B cell (primary cell): ENCODE measurements at regions of chr17 and their contacts with region 1.

Region 1: GRCh38 chr17:8300627-8301242 is 5.5 kb upstream of the SLC25A35 start:
- DNase-seq: peak; percentile 84
- ATAC-seq: peak; percentile 95
- H3K4me3 ChIP-seq: no peak overlapping the region
- H3K4me3 Mint-ChIP-seq: no peak overlapping the region
- H3K27ac ChIP-seq: peak overlapping the region in 1 of 2 donors; percentile 1
- H3K27ac Mint-ChIP-seq: peak overlapping the region; percentile 7
- H3K4me1 ChIP-seq: peaks cover 3 to 4% of the 10 kb centered on the region in 2 donors
- H3K4me1 Mint-ChIP-seq: peaks cover 8% of the 10 kb centered on the region
- H3K27me3 ChIP-seq: no peaks in the 10 kb centered on the region
- H3K27me3 Mint-ChIP-seq: no peaks in the 10 kb centered on the region
- CTCF ChIP-seq: peak; percentile 81

Region 2: DNA sequence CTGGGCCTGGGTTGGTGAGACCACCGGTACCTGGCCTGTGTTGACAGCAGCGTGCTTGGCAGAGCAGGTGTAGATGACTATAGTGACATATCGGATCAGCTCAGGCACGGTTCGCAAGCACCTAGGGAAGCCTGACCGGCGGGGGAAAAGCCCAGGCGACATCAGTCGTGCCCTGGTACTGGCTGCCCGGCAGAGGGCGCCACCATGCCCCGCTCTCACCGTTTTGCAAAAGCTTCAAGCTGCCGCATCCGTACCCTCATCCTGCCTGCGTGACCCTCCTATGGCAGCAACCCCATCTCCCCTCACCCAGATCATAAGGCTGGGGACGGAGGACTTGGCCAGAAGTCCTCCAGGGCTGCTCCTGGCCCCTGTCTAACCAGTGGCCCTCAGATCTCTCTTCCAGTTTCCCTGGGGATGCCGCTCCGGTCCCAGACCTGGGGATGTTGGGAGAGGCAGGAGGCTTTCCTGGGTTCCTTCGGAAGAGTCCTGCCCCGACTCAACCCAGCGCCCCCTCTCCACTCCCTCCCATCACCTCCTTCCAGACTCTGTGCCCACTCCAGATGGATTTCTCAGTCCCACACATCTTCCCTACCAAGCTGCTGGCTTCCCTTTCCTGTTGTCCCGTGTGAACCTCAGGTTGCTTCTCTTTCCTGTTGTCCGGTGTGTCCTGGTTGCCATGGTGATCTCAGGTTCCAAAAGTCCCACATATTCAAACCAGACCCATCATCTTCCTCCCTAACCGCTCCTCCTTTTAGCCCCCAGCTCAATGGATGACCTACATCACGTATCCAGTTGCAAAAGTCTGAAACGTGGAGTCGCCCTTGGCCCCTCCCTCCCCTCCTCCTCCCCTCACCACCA is 226.9 kb before region 1 on chr17:
- CTCF ChIA-PET with region 1: interaction called, 10 read pairs
- POLR2A ChIA-PET with region 1: no interaction called
- intact Hi-C with region 1: loop called (anchors 1 kb)
- DNase-seq: peak; percentile 95
- ATAC-seq: peak; percentile 95
- H3K4me3 ChIP-seq: peak overlapping the region in 1 of 5 experiments; percentile 34
- H3K4me3 Mint-ChIP-seq: peak overlapping the region; percentile 81
- H3K27ac ChIP-seq: no peak overlapping the region
- H3K27ac Mint-ChIP-seq: peak overlapping the region; percentile 57
- H3K4me1 ChIP-seq: peaks cover 28 to 29% of the 10 kb centered on the region in 2 donors
- H3K4me1 Mint-ChIP-seq: peaks cover 27% of the 10 kb centered on the region
- H3K27me3 ChIP-seq: peaks cover 0 to 57% (median 39%) of the 10 kb centered on the region in 4 experiments
- H3K27me3 Mint-ChIP-seq: peaks cover 46% of the 10 kb centered on the region
- CTCF ChIP-seq: peak; percentile 95

Region 3: GRCh38 chr17:8079291-8080207 is 221.2 kb before region 1 on chr17:
- CTCF ChIA-PET with region 1: interaction called, 10 read pairs
- POLR2A ChIA-PET with region 1: no interaction called
- intact Hi-C with region 1: loop called (anchors 1 kb)
- DNase-seq: peak; percentile 90
- ATAC-seq: peak; percentile 82
- H3K4me3 ChIP-seq: peak overlapping the region in 4 of 5 experiments; percentile 57 to 76 (median 70)
- H3K4me3 Mint-ChIP-seq: peak overlapping the region; percentile 96
- H3K27ac ChIP-seq: peak overlapping the region; percentile 48 to 75
- H3K27ac Mint-ChIP-seq: peak overlapping the region; percentile 92
- H3K4me1 ChIP-seq: peaks cover 9 to 15% of the 10 kb centered on the region in 2 donors
- H3K4me1 Mint-ChIP-seq: peaks cover 14% of the 10 kb centered on the region
- H3K27me3 ChIP-seq: peaks cover 0 to 19% (median 10%) of the 10 kb centered on the region in 4 experiments
- H3K27me3 Mint-ChIP-seq: peaks cover 6% of the 10 kb centered on the region
- CTCF ChIP-seq: peak; percentile 90

Region 4: GRCh38 chr17:8091033-8091687 is 209.6 kb before region 1 on chr17:
- CTCF ChIA-PET with region 1: interaction called, 14 read pairs
- POLR2A ChIA-PET with region 1: no interaction called
- intact Hi-C with region 1: no loop called
- DNase-seq: peak; percentile 90
- ATAC-seq: peak; percentile 90
- H3K4me3 ChIP-seq: peak overlapping the region in 3 of 5 experiments; percentile 4 to 47 (median 29)
- H3K4me3 Mint-ChIP-seq: peak overlapping the region; percentile 78
- H3K27ac ChIP-seq: peak overlapping the region in 1 of 2 donors; percentile 55
- H3K27ac Mint-ChIP-seq: peak overlapping the region; percentile 92
- H3K4me1 ChIP-seq: peaks cover 26 to 43% of the 10 kb centered on the region in 2 donors
- H3K4me1 Mint-ChIP-seq: peaks cover 35% of the 10 kb centered on the region
- H3K27me3 ChIP-seq: no peaks in the 10 kb centered on the region
- H3K27me3 Mint-ChIP-seq: peaks cover 12% of the 10 kb centered on the region
- CTCF ChIP-seq: no peak

Region 5: GRCh38 chr17:8103549-8103948 is 197.2 kb before region 1 on chr17:
- CTCF ChIA-PET with region 1: no interaction called
- POLR2A ChIA-PET with region 1: no interaction called
- intact Hi-C with region 1: no loop called
- DNase-seq: no peak
- ATAC-seq: no peak
- H3K4me3 ChIP-seq: no peak overlapping the region
- H3K4me3 Mint-ChIP-seq: no peak overlapping the region
- H3K27ac ChIP-seq: no peak overlapping the region
- H3K27ac Mint-ChIP-seq: no peak overlapping the region
- H3K4me1 ChIP-seq: no peaks in the 10 kb centered on the region
- H3K4me1 Mint-ChIP-seq: no peaks in the 10 kb centered on the region
- H3K27me3 ChIP-seq: peaks cover 0 to 4% (median 0%) of the 10 kb centered on the region in 4 experiments
- H3K27me3 Mint-ChIP-seq: peaks cover 5% of the 10 kb centered on the region
- CTCF ChIP-seq: no peak

Region 6: GRCh38 chr17:8189711-8190477 is 110.8 kb before region 1 on chr17 and contains the start of gene BORCS6:
- CTCF ChIA-PET with region 1: interaction called, 7 read pairs
- POLR2A ChIA-PET with region 1: interaction called, 13 read pairs
- intact Hi-C with region 1: loop called (anchors 1 kb)
- DNase-seq: peak; percentile 97
- ATAC-seq: peak; percentile 64
- H3K4me3 ChIP-seq: peak within 1 kb of the TSS; percentile 27 to 97 (median 74)
- H3K4me3 Mint-ChIP-seq: no peak within 1 kb of the TSS
- H3K27ac ChIP-seq: peak within 1 kb of the TSS; percentile 89 to 93
- H3K27ac Mint-ChIP-seq: no peak within 1 kb of the TSS
- H3K4me1 ChIP-seq: peaks cover 36 to 53% of the 10 kb centered on the region in 2 donors
- H3K4me1 Mint-ChIP-seq: peaks cover 11% of the 10 kb centered on the region
- H3K27me3 ChIP-seq: no peaks in the 10 kb centered on the region
- H3K27me3 Mint-ChIP-seq: no peaks in the 10 kb centered on the region
- CTCF ChIP-seq: no peak
- total RNA-seq, gene BORCS6: 18.6 and 20.2 TPM in 2 replicates

Region 7: GRCh38 chr17:8243827-8244226 is 56.9 kb before region 1 on chr17:
- CTCF ChIA-PET with region 1: interaction called, 28 read pairs
- POLR2A ChIA-PET with region 1: interaction called, 62 read pairs
- intact Hi-C with region 1: loop called (anchors 1 kb)
- DNase-seq: no peak
- ATAC-seq: no peak
- H3K4me3 ChIP-seq: no peak overlapping the region
- H3K4me3 Mint-ChIP-seq: peak overlapping the region; percentile 19
- H3K27ac ChIP-seq: peak overlapping the region in 1 of 2 donors; percentile 100
- H3K27ac Mint-ChIP-seq: no peak overlapping the region
- H3K4me1 ChIP-seq: peaks cover 26 to 31% of the 10 kb centered on the region in 2 donors
- H3K4me1 Mint-ChIP-seq: peaks cover 40% of the 10 kb centered on the region
- H3K27me3 ChIP-seq: no peaks in the 10 kb centered on the region
- H3K27me3 Mint-ChIP-seq: no peaks in the 10 kb centered on the region
- CTCF ChIP-seq: no peak

Region 8: DNA sequence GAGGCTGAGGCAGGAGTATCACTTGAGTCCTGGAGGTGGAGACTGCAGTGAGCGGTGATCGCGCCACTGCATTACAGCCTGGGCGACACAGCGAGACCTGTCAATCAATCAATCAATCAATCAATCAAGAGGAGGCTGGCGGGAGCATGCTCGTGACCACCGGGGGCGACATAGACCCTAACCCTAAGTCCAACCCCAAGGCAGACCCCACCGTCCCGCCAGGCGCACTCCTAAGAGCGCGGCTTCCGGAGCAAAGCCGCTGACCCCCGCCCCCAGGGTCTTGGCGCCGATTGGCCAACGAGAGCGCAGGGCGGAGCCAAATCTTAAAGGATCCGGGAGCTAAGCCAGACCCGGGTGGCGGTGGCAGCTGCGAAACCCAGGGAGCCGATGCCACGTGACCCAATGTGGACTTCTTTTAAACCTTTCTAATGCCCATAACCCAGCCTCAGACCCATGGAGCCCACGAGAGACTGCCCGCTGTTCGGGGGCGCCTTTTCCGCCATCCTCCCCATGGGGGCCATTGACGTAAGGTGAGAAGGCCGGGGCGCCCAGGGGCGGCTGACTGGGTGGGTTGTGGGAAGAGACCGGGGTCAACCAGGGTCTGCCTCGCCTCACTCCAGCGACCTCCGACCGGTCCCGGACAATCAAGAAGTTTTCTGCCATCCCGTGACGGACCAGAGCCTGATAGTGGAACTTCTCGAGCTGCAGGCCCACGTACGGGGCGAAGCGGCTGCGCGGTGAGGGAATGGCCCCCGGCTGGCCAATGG is 12.2 kb before region 1 on chr17 and contains the start of gene RANGRF:
- CTCF ChIA-PET with region 1: interaction called, 6 read pairs
- POLR2A ChIA-PET with region 1: no interaction called
- intact Hi-C with region 1: loop called (anchors 1 kb)
- DNase-seq: peak; percentile 88
- ATAC-seq: peak; percentile 88
- H3K4me3 ChIP-seq: peak within 1 kb of the TSS; percentile 76 to 98 (median 86)
- H3K4me3 Mint-ChIP-seq: peak within 1 kb of the TSS; percentile 92
- H3K27ac ChIP-seq: peak within 1 kb of the TSS; percentile 92
- H3K27ac Mint-ChIP-seq: peak within 1 kb of the TSS; percentile 98
- H3K4me1 ChIP-seq: peaks cover 22 to 32% of the 10 kb centered on the region in 2 donors
- H3K4me1 Mint-ChIP-seq: peaks cover 51% of the 10 kb centered on the region
- H3K27me3 ChIP-seq: no peaks in the 10 kb centered on the region
- H3K27me3 Mint-ChIP-seq: no peaks in the 10 kb centered on the region
- CTCF ChIP-seq: no peak
- total RNA-seq, gene RANGRF: 46.8 and 48.8 TPM in 2 replicates

Region 9: GRCh38 chr17:8479431-8479947 is 178.8 kb after region 1 on chr17:
- CTCF ChIA-PET with region 1: no interaction called
- POLR2A ChIA-PET with region 1: no interaction called
- intact Hi-C with region 1: no loop called
- DNase-seq: no peak
- ATAC-seq: no peak
- H3K4me3 ChIP-seq: no peak overlapping the region
- H3K4me3 Mint-ChIP-seq: no peak overlapping the region
- H3K27ac ChIP-seq: no peak overlapping the region
- H3K27ac Mint-ChIP-seq: no peak overlapping the region
- H3K4me1 ChIP-seq: no peaks in the 10 kb centered on the region
- H3K4me1 Mint-ChIP-seq: no peaks in the 10 kb centered on the region
- H3K27me3 ChIP-seq: no peaks in the 10 kb centered on the region
- H3K27me3 Mint-ChIP-seq: no peaks in the 10 kb centered on the region
- CTCF ChIP-seq: no peak